Activated B cell treated with CpG ODN at 0.5 μM for 24 hours (primary cell): ENCODE measurements at regions of chr1 and their contacts with region 1.

Region 1: GRCh38 chr1:149979972-149980540 is 30.5 kb downstream of the OTUD7B start:
- DNase-seq: no peak
- ATAC-seq: no peak
- H3K4me3 Mint-ChIP-seq: no peak overlapping the region
- H3K27ac Mint-ChIP-seq: no peak overlapping the region
- H3K4me1 Mint-ChIP-seq: peaks cover 4% of the 10 kb centered on the region
- H3K27me3 Mint-ChIP-seq: no peaks in the 10 kb centered on the region
- CTCF ChIP-seq: no peak

Region 2: GRCh38 chr1:149927503-149928387 is 52.3 kb before region 1 on chr1 and contains the start of gene SF3B4:
- CTCF ChIA-PET with region 1: no interaction called
- POLR2A ChIA-PET with region 1: no interaction called
- intact Hi-C with region 1: no loop called
- DNase-seq: peak; percentile 94
- ATAC-seq: peak; percentile 96
- H3K4me3 Mint-ChIP-seq: peak within 1 kb of the TSS; percentile 98
- H3K27ac Mint-ChIP-seq: peak within 1 kb of the TSS; percentile 95
- H3K4me1 Mint-ChIP-seq: peaks cover 36% of the 10 kb centered on the region
- H3K27me3 Mint-ChIP-seq: peaks cover 12% of the 10 kb centered on the region
- CTCF ChIP-seq: no peak
- total RNA-seq, gene SF3B4: 80.8 and 86.2 TPM in 2 replicates

Region 3: DNA sequence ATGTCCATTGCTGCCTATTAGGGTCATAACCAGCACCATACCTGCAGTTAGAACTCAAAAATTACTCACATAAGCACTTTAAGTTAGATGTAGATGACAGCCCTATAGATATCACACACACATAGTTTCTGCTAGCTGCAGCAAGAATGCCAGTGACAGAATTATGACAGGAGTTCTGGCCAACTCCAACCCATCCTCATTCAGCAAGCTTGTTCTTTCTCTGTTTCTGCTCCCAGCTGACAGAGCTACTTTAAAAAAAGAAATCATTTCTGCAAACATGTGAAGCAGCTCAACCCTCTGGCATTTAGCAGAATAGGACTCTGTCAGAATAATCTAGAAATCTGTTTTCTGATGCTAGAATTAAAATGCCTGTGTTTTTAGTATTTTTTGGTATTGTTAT is 54.3 kb after region 1 on chr1:
- CTCF ChIA-PET with region 1: no interaction called
- POLR2A ChIA-PET with region 1: no interaction called
- intact Hi-C with region 1: loop called (anchors 5 kb)
- DNase-seq: no peak
- ATAC-seq: no peak
- H3K4me3 Mint-ChIP-seq: no peak overlapping the region
- H3K27ac Mint-ChIP-seq: no peak overlapping the region
- H3K4me1 Mint-ChIP-seq: no peaks in the 10 kb centered on the region
- H3K27me3 Mint-ChIP-seq: peaks cover 7% of the 10 kb centered on the region
- CTCF ChIP-seq: no peak